Activated CD8-positive, alpha-beta T cell treated with anti-CD3 and anti-CD28 coated beads, Interleukin-2, amount 10 ng/mL, durations not matched to agents 7 days and 5 days (primary cell): ENCODE measurements at regions of chr12 and their contacts with region 1.

Region 1: GRCh38 chr12:109110988-109111495 is 5.3 kb upstream of the ACACB start:
- DNase-seq: peak; percentile 60
- ATAC-seq: peak; percentile 83
- H3K4me3 Mint-ChIP-seq: peak overlapping the region; percentile 67
- H3K27ac Mint-ChIP-seq: peak overlapping the region; percentile 69
- H3K4me1 Mint-ChIP-seq: peaks cover 24% of the 10 kb centered on the region
- H3K27me3 Mint-ChIP-seq: no peaks in the 10 kb centered on the region

Region 2: GRCh38 chr12:109087250-109087649 is 23.8 kb before region 1 on chr12:
- CTCF ChIA-PET with region 1: interaction called, 10 read pairs
- POLR2A ChIA-PET with region 1: no interaction called
- DNase-seq: no peak
- ATAC-seq: no peak
- H3K4me3 Mint-ChIP-seq: no peak overlapping the region
- H3K27ac Mint-ChIP-seq: no peak overlapping the region
- H3K4me1 Mint-ChIP-seq: peaks cover 16% of the 10 kb centered on the region
- H3K27me3 Mint-ChIP-seq: no peaks in the 10 kb centered on the region

Region 3: DNA sequence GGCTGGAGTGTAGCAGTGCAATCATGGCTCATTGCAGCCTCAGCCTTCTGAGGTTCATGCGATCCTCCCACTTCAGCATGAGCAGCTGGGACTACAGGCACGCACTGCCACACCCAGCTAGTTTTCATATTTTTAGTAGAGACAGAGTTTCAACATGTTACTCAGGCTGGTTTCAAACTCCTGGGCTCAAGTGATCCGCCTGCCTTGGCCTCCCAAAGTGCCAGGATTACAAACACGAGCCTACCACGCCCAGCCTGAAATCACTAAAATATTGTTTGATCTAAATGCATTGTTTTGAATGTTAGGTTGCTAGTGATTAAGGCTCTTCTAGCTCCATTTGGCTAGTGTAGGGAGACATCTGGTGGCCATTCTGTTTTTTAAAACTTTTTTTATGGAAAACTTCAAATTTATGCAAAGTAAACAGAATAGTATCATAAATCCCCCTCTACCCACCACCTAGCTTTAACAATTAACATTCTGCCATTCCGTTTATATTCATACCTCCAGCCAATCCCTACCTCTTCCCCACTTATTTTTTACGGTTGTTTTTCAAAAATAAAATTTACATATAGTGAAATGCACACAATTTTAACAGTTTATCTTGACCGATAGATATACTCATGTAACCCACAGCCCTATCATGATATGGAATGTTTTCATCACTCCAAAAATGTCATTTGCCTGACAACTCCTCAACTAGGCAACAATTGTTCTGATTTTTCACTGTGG is 274.5 kb after region 1 on chr12:
- CTCF ChIA-PET with region 1: interaction called, 15 read pairs
- POLR2A ChIA-PET with region 1: no interaction called
- DNase-seq: no peak
- ATAC-seq: no peak
- H3K4me3 Mint-ChIP-seq: no peak overlapping the region
- H3K27ac Mint-ChIP-seq: no peak overlapping the region
- H3K4me1 Mint-ChIP-seq: no peaks in the 10 kb centered on the region
- H3K27me3 Mint-ChIP-seq: peaks cover 21% of the 10 kb centered on the region